ENCODE measurements at regions of chr20 and their contacts with region 1.

Region 1: GRCh38 chr20:55614220-55614757 is 391.0 kb downstream of the CBLN4 start:
- DNase-seq: no peak
- ATAC-seq: no peak
- H3K4me3 ChIP-seq: no peak overlapping the region
- H3K4me3 Mint-ChIP-seq: no peak overlapping the region
- H3K27ac ChIP-seq: no peak overlapping the region
- H3K27ac Mint-ChIP-seq: no peak overlapping the region
- H3K4me1 ChIP-seq: no peaks in the 10 kb centered on the region
- H3K4me1 Mint-ChIP-seq: no peaks in the 10 kb centered on the region
- H3K27me3 ChIP-seq: no peaks in the 10 kb centered on the region
- H3K27me3 Mint-ChIP-seq: no peaks in the 10 kb centered on the region
- CTCF ChIP-seq: no peak

Region 2: DNA sequence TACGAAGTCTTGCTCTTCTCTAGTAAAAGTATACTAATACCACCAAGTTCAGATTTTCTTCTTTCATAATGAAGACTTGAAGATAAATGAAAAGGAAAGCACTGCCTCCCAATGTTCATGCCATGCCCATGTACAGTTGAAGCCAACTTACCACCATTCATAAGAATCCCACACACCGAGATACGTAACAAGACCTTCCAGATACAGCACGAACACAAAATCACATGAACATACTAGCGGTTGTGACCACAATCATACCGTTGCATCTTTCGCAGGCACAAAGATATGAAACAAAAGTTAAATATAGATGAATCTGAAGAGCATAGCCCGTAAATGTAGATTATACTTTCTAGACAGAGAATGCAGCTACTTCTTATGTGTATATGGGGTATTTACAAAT is 21.4 kb before region 1 on chr20:
- CTCF ChIA-PET with region 1: no interaction called
- POLR2A ChIA-PET with region 1: no interaction called
- intact Hi-C with region 1: loop called in 1 of 2 experiments (anchors 2 kb)
- DNase-seq: no peak
- ATAC-seq: no peak
- H3K4me3 ChIP-seq: no peak overlapping the region
- H3K4me3 Mint-ChIP-seq: no peak overlapping the region
- H3K27ac ChIP-seq: no peak overlapping the region
- H3K27ac Mint-ChIP-seq: no peak overlapping the region
- H3K4me1 ChIP-seq: no peaks in the 10 kb centered on the region
- H3K4me1 Mint-ChIP-seq: no peaks in the 10 kb centered on the region
- H3K27me3 ChIP-seq: no peaks in the 10 kb centered on the region
- H3K27me3 Mint-ChIP-seq: no peaks in the 10 kb centered on the region
- CTCF ChIP-seq: no peak